ENCODE measurements at regions of chr9 and their contacts with region 1.

Region 1: GRCh38 chr9:35732122-35732799 is at the starts of genes CREB3 and TLN1:
- DNase-seq: peak; percentile 98
- ATAC-seq: peak; percentile 87
- H3K4me3 Mint-ChIP-seq: no peak within 1 kb of the TSS
- H3K27ac Mint-ChIP-seq: peak within 1 kb of the TSS; percentile 93
- H3K4me1 Mint-ChIP-seq: peaks cover 21% of the 10 kb centered on the region
- H3K27me3 Mint-ChIP-seq: no peaks in the 10 kb centered on the region
- total RNA-seq, gene CREB3: 24.0 to 26.0 TPM
- total RNA-seq, gene TLN1: 217 to 238 TPM

Region 2: DNA sequence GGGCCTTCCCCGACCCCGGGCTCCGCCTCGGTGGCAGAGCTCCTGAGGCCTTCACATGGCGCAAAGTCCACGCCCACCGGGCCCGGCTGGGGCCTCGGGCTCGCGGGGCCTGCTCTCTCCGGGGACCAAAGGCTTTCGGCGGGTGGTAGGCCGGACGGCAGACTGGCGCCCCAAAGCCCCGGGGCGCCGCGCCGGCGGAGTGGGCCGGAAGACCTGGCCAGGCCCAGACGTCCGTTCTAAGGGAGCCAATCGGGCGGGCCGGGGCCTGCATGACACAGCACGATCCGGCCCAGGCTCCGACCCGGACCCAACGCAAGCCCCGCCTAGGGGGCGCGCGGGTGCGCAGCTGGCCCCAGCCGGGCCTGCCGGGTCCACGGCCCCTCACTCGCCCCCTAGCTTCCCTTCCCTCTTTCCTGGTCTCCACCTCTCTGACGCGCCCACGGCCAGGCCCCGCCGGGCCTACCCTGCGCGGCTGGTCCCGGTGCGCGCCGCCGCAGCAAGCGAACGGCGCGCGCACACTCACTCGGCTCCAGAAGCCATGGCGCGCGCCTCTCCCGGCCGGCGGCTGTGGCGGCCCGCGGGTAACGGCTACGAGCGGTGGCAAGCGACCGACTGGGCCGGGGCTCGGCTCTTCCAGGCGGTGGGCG is 660.3 kb before region 1 on chr9:
- CTCF ChIA-PET with region 1: no interaction called
- POLR2A ChIA-PET with region 1: no interaction called
- intact Hi-C with region 1: loop called in 1 of 2 experiments (anchors 2 kb)
- DNase-seq: peak; percentile 83
- ATAC-seq: peak; percentile 47
- H3K4me3 Mint-ChIP-seq: peak overlapping the region; percentile 91
- H3K27ac Mint-ChIP-seq: peak overlapping the region; percentile 95
- H3K4me1 Mint-ChIP-seq: peaks cover 56% of the 10 kb centered on the region
- H3K27me3 Mint-ChIP-seq: no peaks in the 10 kb centered on the region

Region 3: GRCh38 chr9:35489313-35490154 is 242.7 kb before region 1 on chr9 and contains the start of gene RUSC2:
- CTCF ChIA-PET with region 1: no interaction called
- POLR2A ChIA-PET with region 1: no interaction called
- intact Hi-C with region 1: loop called in 1 of 2 experiments (anchors 10 kb)
- DNase-seq: peak; percentile 82
- ATAC-seq: peak; percentile 72
- H3K4me3 Mint-ChIP-seq: peak within 1 kb of the TSS; percentile 76
- H3K27ac Mint-ChIP-seq: peak within 1 kb of the TSS; percentile 79
- H3K4me1 Mint-ChIP-seq: peaks cover 31% of the 10 kb centered on the region
- H3K27me3 Mint-ChIP-seq: peaks cover 9% of the 10 kb centered on the region
- total RNA-seq, gene RUSC2: 5.7 to 6.5 TPM

Region 4: DNA sequence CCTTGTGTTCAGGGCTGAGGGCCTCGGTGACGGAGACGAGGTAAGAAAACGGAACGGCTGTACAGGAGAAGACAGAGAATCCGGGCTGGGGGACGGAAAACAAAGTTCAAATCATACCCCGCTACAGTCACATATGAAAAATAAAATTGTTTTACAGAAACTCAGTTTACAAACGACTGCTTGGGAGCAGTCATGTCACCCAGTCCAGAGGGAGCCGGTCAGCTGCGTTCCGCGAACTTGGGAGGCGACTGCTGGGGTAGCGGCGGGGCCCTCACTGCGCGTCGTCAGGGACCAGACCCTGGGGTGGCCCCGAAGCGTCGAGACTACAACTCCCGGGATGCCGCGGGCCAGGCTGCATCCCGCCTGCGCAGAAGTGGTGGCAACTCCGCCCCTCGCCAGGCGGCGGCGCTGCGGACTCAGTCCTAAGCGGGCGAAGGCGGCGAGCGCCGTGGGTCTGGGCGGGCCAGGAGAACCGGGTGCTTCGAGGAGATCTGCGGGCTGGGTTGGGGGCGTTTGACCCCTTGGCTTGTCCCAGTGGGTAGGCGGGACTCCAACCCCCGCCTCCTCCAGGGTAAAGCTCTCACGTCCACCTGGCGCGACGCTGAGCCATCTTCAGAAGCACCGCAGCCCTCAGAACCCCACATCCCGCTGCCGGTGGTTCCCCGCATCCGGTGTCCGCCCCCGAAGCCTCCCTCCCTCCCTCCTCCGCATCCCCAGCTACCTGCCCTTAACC is 85.6 kb before region 1 on chr9:
- CTCF ChIA-PET with region 1: interaction called, 49 read pairs
- POLR2A ChIA-PET with region 1: interaction called, 3 read pairs
- intact Hi-C with region 1: loop called (anchors 1 kb)
- DNase-seq: peak; percentile 96
- ATAC-seq: peak; percentile 84
- H3K4me3 Mint-ChIP-seq: peak overlapping the region; percentile 91
- H3K27ac Mint-ChIP-seq: peak overlapping the region; percentile 97
- H3K4me1 Mint-ChIP-seq: peaks cover 51% of the 10 kb centered on the region
- H3K27me3 Mint-ChIP-seq: no peaks in the 10 kb centered on the region

Region 5: GRCh38 chr9:35716230-35716629 is 16.0 kb before region 1 on chr9:
- CTCF ChIA-PET with region 1: interaction called, 12 read pairs
- POLR2A ChIA-PET with region 1: no interaction called
- intact Hi-C with region 1: no loop called
- DNase-seq: no peak
- ATAC-seq: no peak
- H3K4me3 Mint-ChIP-seq: no peak overlapping the region
- H3K27ac Mint-ChIP-seq: no peak overlapping the region
- H3K4me1 Mint-ChIP-seq: peaks cover 7% of the 10 kb centered on the region
- H3K27me3 Mint-ChIP-seq: no peaks in the 10 kb centered on the region

Region 6: DNA sequence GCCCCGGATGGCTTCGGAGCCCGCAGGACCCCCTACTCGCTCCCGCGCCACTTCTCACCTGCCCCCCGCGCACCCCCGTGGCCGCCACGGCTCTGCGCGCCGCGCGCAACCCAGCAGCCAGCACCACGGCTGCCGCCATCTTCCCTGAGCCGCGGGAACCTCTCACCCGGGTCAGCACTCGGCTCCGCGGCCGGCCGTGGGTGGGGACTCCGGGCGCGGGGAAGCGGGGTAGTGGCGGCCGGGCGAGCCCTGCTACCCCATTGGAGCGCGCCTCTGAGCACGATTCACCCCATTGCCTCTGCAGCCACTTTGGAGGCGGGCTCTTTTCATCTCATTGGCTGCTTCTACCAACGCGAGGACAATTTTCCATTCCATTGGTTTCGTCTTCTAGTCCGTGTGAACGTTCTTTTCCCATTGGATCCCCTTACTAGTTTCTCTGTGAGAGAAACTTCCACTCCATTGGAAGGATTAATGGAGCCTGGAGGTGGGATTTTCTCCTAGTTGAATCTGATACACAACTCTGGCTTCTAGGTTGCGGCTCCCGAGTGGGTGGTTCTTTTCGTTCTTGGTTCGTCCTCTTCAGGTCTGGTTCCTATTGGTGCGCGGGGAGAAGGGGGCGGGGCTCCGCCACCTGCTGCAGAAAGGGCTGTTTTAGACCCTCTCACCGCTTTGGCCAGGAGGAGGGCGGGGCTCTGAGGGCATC is 82.7 kb after region 1 on chr9 and contains the start of gene HINT2:
- CTCF ChIA-PET with region 1: interaction called, 8 read pairs
- POLR2A ChIA-PET with region 1: no interaction called
- intact Hi-C with region 1: loop called (anchors 1 kb)
- DNase-seq: peak; percentile 99
- ATAC-seq: peak; percentile 85
- H3K4me3 Mint-ChIP-seq: peak within 1 kb of the TSS; percentile 93
- H3K27ac Mint-ChIP-seq: peak within 1 kb of the TSS; percentile 98
- H3K4me1 Mint-ChIP-seq: peaks cover 33% of the 10 kb centered on the region
- H3K27me3 Mint-ChIP-seq: no peaks in the 10 kb centered on the region
- total RNA-seq, gene HINT2: 47.4 to 61.1 TPM

Region 7: GRCh38 chr9:36190388-36191287 is 458.4 kb after region 1 on chr9 and contains the start of gene CLTA:
- CTCF ChIA-PET with region 1: interaction called, 4 read pairs
- POLR2A ChIA-PET with region 1: no interaction called
- intact Hi-C with region 1: loop called in 1 of 2 experiments (anchors 1 kb)
- DNase-seq: peak; percentile 96
- ATAC-seq: peak; percentile 99
- H3K4me3 Mint-ChIP-seq: peak within 1 kb of the TSS; percentile 95
- H3K27ac Mint-ChIP-seq: peak within 1 kb of the TSS; percentile 88
- H3K4me1 Mint-ChIP-seq: peaks cover 45% of the 10 kb centered on the region
- H3K27me3 Mint-ChIP-seq: no peaks in the 10 kb centered on the region
- total RNA-seq, gene CLTA: 123 to 133 TPM